Right cardiac atrium (tissue), 5 donors: ENCODE measurements at regions of chr9 and their contacts with region 1.

Region 1: DNA sequence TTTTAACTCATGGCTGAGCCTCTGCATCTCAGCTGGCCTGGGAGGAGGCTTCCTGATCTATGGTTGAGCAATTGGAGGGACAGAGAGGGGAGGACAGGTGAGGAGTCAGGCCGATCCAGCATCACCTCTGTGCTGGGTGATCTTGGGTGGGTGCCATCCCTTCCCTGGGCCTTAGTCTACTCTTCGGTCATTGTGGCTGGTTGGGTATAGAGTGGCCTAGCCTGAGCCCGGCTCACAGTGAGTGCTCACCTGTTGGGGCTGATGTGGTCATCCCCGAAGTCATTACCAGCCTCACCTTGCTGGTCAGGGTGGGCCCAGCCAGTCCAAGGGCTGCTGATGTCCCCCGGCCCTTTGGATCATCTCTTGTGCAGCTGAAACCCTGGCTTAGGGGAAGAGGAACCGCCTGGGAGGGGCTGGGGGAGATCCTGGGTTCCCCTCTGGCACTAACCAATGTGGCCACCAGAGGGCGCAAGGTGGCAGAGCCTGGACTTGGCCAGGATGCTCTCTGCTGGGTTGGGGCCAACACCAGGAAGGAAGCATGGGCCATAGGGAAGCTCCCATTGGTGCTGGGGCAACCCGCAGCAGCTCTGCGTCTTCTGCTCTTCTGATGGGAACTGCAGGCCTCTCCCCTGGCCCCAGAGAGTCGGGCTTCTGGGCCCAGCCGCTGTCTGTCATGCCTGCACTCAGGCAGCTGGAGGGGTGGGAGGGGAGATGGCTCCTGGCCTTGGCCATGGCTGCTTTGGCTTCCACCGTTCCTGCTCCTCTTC is 17.3 kb upstream of the ODF2 start:
- DNase-seq: peak; percentile 91 to 95 (median 95)
- ATAC-seq: peak; percentile 90 to 91
- H3K4me3 ChIP-seq: no peak overlapping the region
- H3K27ac ChIP-seq: no peak overlapping the region
- H3K4me1 ChIP-seq: no peaks in the 10 kb centered on the region
- H3K27me3 ChIP-seq: no peaks in the 10 kb centered on the region

Region 2: DNA sequence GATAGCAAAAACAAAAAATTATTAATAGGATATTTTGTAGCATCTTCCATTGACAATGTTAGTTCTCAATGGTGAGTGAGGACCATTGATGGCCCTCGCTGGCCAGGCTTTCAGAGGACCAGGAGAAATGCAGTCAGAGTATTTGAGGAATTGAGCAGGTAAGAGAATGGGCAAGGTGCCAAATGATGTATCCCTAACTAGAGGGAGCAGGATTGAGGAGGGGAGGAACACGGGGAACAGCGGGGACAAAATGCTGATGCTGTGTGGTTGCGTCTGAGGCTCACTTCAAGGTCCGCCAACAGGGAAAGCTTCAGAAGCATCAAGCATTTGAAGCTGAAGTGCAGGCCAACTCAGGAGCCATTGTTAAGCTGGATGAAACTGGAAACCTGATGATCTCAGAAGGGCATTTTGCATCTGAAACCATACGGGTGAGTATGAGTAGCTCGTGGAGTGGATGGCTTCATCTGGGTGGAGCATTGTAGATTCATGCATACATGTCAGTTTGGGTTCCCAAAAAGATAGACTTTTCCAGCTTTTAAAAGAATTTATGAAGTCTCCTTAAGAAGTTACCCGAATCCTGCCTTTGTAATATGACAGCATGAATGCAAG is 130.0 kb after region 1 on chr9:
- intact Hi-C with region 1: loop called in 1 of 4 experiments (anchors 10 kb)
- DNase-seq: no peak
- ATAC-seq: no peak
- H3K4me3 ChIP-seq: no peak overlapping the region
- H3K27ac ChIP-seq: no peak overlapping the region
- H3K4me1 ChIP-seq: peaks cover 4% of the 10 kb centered on the region
- H3K27me3 ChIP-seq: no peaks in the 10 kb centered on the region

Region 3: DNA sequence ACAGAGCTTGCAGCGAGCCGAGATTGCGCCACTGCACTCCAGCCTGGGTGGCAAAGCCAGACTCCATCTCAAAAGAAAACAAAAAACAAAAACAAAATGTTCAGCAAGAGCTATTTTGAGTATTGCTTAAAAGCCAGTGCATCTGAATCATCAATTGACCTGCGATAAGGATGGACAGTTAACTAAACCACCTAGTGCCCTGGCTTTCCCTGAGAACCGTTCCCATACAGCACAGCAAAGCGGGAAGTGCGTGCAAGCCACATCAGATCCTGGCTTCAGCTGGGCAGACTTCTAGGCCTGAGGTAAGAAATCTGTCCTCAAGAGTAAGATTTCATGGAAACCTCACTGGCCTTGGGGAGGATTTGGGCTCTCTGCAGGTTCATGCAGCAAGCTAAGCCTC is 215.4 kb after region 1 on chr9:
- intact Hi-C with region 1: no loop called
- DNase-seq: peak in 1 of 3 donors; percentile 1
- ATAC-seq: no peak
- H3K4me3 ChIP-seq: no peak overlapping the region
- H3K27ac ChIP-seq: no peak overlapping the region
- H3K4me1 ChIP-seq: peaks cover 2% of the 10 kb centered on the region
- H3K27me3 ChIP-seq: no peaks in the 10 kb centered on the region